ENCODE measurements at regions of chr3 and their contacts with region 1.

Region 1: DNA sequence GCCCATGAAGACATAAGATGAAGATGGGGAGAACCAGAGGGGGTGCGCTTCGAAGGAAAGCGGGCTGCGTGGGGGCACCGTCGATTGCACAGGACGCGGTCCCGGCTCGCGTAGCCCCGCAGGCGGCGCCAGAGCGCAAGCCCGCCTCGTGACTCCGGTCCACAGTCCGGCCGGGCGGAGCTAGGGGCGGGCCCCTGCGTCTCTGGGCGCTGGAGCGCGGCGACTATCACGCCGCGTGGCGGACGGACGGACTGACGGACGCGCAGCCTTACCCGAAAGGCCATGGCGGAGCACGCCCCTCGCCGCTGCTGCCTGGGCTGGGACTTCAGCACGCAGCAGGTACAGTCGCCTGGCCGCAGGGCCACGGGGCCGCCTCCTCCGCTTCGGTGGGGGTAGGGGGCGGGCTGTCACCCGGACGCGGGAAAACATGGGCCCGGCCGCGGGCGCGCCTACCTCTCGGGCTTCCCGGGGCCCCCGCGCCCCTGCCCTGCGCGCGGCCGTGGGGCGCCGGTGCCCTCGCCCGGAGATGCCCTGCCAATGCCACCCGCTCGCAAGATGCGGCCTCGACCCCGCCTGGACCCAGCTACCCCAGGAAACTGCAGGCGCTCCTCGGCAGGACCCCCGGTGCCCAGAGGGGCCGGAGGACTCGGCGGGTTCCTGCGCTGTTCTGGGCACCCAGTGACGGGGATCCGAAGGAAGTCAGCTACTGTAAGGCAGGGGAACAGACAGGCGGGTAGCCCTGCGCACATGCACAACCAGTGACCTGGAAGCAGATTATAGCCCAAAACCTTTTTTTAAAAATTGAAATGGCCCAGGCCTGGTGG is at the start of gene XYLB:
- DNase-seq: no peak
- H3K4me3 ChIP-seq: peak within 1 kb of the TSS; percentile 71 to 91
- H3K27ac ChIP-seq: peak within 1 kb of the TSS; percentile 72
- H3K4me1 ChIP-seq: peaks cover 10% of the 10 kb centered on the region
- H3K27me3 ChIP-seq: no peaks in the 10 kb centered on the region
- CTCF ChIP-seq: peak; percentile 84 to 98 (median 89)
- POLR2A ChIP-seq: no peak
- total RNA-seq, gene XYLB: 3.4 TPM

Region 2: DNA sequence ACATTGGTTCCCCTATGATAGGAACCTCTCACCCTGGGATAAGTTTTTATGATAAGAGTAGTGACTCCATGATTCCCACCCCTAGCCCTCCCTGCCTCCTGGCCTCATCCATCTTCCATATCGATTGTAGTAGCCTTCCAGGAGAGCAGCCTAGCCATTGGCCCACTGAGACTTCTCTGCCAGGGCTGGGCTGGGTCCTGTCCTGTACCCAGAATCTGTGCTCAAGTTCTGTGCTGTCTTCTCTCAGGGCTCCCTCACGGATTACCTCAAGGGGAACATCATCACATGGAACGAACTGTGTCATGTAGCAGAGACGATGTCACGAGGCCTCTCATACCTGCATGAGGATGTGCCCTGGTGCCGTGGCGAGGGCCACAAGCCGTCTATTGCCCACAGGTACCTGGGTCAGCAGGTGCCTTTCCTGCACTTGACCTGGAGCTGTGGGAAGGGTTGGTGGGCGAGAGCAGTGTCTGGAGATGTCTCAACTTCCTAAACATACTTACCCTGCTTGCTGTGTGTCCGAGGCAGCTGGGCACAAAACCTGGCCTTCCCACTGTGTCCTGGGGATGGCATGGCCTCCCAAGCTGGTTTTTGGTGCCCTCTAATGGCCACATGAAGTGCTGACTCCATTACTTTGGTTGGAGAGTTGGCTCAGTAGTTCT is 132.8 kb after region 1 on chr3:
- intact Hi-C with region 1: loop called (anchors 5 kb)
- DNase-seq: peak in 1 of 2 donors; percentile 83
- H3K4me3 ChIP-seq: no peak overlapping the region
- H3K27ac ChIP-seq: no peak overlapping the region
- H3K4me1 ChIP-seq: peaks cover 5% of the 10 kb centered on the region
- H3K27me3 ChIP-seq: no peaks in the 10 kb centered on the region
- CTCF ChIP-seq: peak; percentile 69 to 74 (median 73)
- POLR2A ChIP-seq: no peak